ENCODE measurements at regions of chr16 and their contacts with region 1.

Region 1: GRCh38 chr16:27179500-27180072 is 23.7 kb upstream of the KDM8 start:
- DNase-seq: peak; percentile 94
- ATAC-seq: peak; percentile 96
- H3K4me3 ChIP-seq: no peak overlapping the region
- H3K27ac ChIP-seq: no peak overlapping the region
- H3K4me1 ChIP-seq: no peaks in the 10 kb centered on the region
- H3K27me3 ChIP-seq: peaks cover 0 to 2% of the 10 kb centered on the region in 2 donors

Region 2: DNA sequence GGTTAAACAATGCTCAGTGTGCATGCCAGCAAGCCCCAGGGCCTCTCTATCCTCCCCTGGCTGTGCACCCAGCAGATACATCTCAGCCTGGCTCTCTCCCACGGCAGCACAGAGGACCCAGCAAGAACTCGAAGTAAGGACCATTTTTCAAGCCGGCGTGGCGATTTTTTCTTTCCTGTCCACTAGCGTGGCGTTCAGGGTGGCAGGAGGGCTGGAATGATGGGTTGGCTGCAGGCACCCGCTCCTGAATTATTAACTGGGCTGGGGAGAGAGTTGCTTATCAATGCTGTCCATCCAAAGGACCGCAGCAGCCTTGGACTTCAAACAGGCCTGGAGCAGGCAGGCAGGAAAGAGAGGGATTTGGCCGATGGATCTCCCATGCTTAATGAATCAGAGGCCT is 105.9 kb before region 1 on chr16:
- intact Hi-C with region 1: no loop called
- DNase-seq: no peak
- ATAC-seq: no peak
- H3K4me3 ChIP-seq: no peak overlapping the region
- H3K27ac ChIP-seq: no peak overlapping the region
- H3K4me1 ChIP-seq: no peaks in the 10 kb centered on the region
- H3K27me3 ChIP-seq: peaks cover 0 to 1% of the 10 kb centered on the region in 2 donors

Region 3: DNA sequence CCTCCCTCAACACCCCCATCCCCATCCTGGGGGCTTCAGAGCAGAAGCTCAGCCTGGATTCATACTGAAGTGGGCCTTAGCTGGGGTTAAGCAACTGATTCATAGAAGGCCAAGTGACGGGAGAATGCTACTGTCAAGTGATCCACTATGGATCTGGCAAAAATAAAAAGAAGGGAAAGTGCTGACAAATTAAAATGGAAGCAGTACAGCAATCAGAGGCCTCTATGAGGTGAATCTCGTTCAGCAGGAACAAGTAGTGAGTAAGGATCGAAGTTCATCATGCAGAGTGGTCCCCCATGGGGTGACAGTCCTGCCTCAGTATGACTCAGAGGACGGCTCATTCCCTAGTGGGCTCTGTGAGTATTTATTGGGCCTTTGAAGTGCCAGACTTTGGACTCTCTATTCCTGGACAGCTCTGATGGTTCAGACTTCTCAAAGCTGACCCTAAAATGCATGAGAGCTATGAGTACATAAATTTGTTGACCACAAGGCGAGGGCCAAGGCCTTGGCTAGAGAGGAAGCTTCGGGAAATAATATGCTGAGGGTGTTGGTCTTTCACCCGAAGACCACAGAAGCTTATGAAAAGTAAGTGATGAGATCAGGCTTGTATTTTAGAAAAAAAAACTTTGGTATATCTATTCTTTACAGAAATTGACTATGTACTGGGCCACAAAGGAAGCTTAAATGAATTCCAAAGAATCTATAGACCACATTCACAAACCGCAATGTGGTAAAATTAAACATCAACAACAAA is 94.3 kb after region 1 on chr16:
- intact Hi-C with region 1: no loop called
- DNase-seq: no peak
- ATAC-seq: no peak
- H3K4me3 ChIP-seq: no peak overlapping the region
- H3K27ac ChIP-seq: no peak overlapping the region
- H3K4me1 ChIP-seq: no peaks in the 10 kb centered on the region
- H3K27me3 ChIP-seq: no peaks in the 10 kb centered on the region

Region 4: DNA sequence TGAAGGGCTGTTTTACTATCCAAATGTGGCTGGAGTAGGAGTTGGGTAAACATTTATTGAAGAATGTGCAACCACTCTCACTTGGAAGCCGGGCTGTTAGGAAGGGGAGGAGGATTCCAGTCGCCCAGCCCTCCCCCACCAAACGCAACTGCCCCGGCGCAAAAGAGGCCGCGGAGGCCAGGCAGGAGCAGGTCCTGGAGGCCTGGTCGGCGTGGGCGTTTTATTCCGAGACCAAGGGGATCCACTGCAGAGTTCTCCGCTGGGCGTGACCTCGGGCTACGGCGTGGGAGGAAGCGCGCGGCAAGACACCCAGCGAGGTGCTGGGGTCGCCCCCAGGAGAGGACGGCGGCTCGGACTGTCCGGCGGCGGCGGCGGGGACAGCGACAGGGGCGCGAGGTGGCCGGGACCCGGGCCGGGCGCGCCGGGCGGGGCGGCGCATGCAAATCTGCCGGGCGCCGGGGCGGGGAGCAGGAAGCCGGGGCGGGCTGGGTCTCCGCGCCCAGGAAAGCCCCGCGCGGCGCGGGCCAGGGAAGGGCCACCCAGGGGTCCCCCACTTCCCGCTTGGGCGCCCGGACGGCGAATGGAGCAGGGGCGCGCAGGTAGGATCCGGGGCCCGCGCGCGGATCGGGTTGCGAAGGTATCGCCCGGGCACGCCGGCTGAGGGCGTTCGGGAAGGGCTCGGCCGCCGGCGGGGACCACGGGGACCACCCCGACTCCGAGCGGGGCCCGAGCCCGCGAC is 134.0 kb after region 1 on chr16 and contains the start of gene IL4R:
- intact Hi-C with region 1: no loop called
- DNase-seq: peak; percentile 92 to 93
- ATAC-seq: peak; percentile 56
- H3K4me3 ChIP-seq: peak within 1 kb of the TSS; percentile 33 to 65
- H3K27ac ChIP-seq: peak within 1 kb of the TSS; percentile 36 to 61
- H3K4me1 ChIP-seq: no peaks in the 10 kb centered on the region
- H3K27me3 ChIP-seq: no peaks in the 10 kb centered on the region
- total RNA-seq, gene IL4R: 91.7 to 138 TPM

Region 5: DNA sequence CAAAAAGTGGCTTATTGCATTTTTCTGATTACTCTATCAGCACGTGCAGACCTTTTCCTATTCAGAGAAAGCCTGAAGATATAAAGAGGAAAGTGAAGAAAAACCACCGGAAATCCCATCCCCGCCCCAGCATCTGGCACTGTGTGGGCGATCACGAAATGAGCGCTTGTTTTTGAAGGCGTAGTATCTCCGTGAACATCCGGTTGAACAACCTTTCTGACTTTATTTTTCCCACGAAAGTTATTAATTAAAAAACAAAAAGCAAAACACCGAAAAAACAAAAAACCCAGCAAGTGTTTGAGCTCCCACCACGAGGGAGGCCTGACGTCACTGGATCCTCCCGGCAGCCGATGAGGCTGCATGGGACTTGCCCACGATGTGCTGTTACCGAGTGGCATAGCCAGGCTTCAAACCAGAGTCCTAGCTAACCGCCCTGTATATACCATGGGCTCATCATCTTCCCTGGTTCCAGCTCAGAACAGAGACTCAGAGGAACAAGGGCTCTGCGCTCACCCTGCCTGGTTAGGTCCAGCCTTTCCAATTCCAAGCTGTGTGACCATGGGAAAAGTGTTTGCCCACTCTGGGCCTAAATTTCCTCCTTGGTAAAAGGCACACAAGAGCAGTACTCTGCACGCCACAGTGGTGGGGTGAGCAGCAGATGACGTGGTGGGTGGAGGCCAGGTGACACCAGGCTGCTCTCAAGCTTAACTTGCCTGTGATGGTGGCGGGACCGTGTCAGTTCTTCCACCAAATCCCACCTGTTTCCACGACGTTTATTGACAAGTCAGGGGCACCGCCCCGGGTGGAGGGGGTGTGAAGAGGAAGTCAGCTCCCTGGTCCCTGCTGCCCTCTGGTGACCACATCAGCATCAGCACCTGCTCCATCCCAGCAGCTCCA is 188.1 kb after region 1 on chr16:
- intact Hi-C with region 1: loop called (anchors 2 to 5 kb)
- DNase-seq: peak; percentile 90 to 91
- ATAC-seq: peak; percentile 88
- H3K4me3 ChIP-seq: no peak overlapping the region
- H3K27ac ChIP-seq: no peak overlapping the region
- H3K4me1 ChIP-seq: no peaks in the 10 kb centered on the region
- H3K27me3 ChIP-seq: no peaks in the 10 kb centered on the region

Region 6: GRCh38 chr16:27374804-27375425 is 195.3 kb after region 1 on chr16:
- intact Hi-C with region 1: loop called in 1 of 2 experiments (anchors 5 kb)
- DNase-seq: peak; percentile 81 to 88
- ATAC-seq: peak; percentile 86
- H3K4me3 ChIP-seq: no peak overlapping the region
- H3K27ac ChIP-seq: no peak overlapping the region
- H3K4me1 ChIP-seq: no peaks in the 10 kb centered on the region
- H3K27me3 ChIP-seq: no peaks in the 10 kb centered on the region

Region 7: GRCh38 chr16:27449434-27450195 is 270.0 kb after region 1 on chr16:
- intact Hi-C with region 1: loop called in 1 of 2 experiments (anchors 10 kb)
- DNase-seq: no peak
- ATAC-seq: no peak
- H3K4me3 ChIP-seq: no peak overlapping the region
- H3K27ac ChIP-seq: no peak overlapping the region
- H3K4me1 ChIP-seq: no peaks in the 10 kb centered on the region
- H3K27me3 ChIP-seq: no peaks in the 10 kb centered on the region

Region 8: GRCh38 chr16:27461483-27462171 is 282.0 kb after region 1 on chr16:
- intact Hi-C with region 1: loop called (anchors 1 to 10 kb)
- DNase-seq: peak in 1 of 2 donors; percentile 57
- ATAC-seq: no peak
- H3K4me3 ChIP-seq: no peak overlapping the region
- H3K27ac ChIP-seq: no peak overlapping the region
- H3K4me1 ChIP-seq: no peaks in the 10 kb centered on the region
- H3K27me3 ChIP-seq: no peaks in the 10 kb centered on the region